Transverse colon (tissue), 4 donors: ENCODE measurements at regions of chr17 and their contacts with region 1.

Region 1: DNA sequence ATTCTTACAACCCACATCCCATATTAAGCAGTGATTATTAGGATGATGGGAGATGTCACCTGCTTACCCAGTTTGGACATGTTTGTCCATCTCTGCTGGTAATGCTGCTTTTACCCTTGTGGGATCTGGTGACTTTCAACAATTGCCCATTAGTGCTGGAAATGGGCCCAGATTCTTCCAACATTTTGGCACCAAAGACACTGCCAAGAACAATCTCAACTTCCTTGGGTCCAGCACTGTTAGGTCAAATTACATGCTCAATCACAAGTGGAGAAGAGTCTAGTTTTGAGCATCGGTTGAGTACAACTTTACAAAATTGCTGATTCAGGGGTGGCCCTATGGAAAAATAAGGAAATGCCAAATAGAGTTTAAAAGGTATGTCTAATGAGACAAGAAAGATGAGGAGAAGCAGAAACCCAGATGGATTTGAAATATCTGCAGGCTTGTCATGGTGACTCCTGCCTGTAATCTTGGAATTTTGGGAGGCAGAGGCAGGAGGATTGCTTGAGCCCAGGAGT is 13.0 kb upstream of the ZFP3 start:
- DNase-seq: no peak
- H3K4me3 ChIP-seq: no peak overlapping the region
- H3K27ac ChIP-seq: no peak overlapping the region
- H3K4me1 ChIP-seq: peaks cover 0 to 7% (median 0%) of the 10 kb centered on the region in 4 donors
- H3K27me3 ChIP-seq: no peaks in the 10 kb centered on the region
- CTCF ChIP-seq: no peak
- EP300 ChIP-seq: no peak
- POLR2A ChIP-seq: no peak

Region 2: GRCh38 chr17:4648741-4649140 is 416.5 kb before region 1 on chr17:
- in situ Hi-C with region 1: no loop called
- intact Hi-C with region 1: no loop called
- DNase-seq: peak; percentile 63
- H3K4me3 ChIP-seq: no peak overlapping the region
- H3K27ac ChIP-seq: peak overlapping the region; percentile 27 to 66 (median 54)
- H3K4me1 ChIP-seq: peaks cover 0 to 23% (median 14%) of the 10 kb centered on the region in 4 donors
- H3K27me3 ChIP-seq: peaks cover 5% of the 10 kb centered on the region
- CTCF ChIP-seq: no peak
- EP300 ChIP-seq: no peak
- POLR2A ChIP-seq: no peak

Region 3: GRCh38 chr17:4913994-4914393 is 151.3 kb before region 1 on chr17:
- in situ Hi-C with region 1: loop called in 3 of 4 experiments (anchors 10 to 25 kb)
- intact Hi-C with region 1: loop called (anchors 5 kb)
- DNase-seq: no peak
- H3K4me3 ChIP-seq: no peak overlapping the region
- H3K27ac ChIP-seq: no peak overlapping the region
- H3K4me1 ChIP-seq: peaks cover 3 to 13% (median 10%) of the 10 kb centered on the region in 4 donors
- H3K27me3 ChIP-seq: no peaks in the 10 kb centered on the region
- CTCF ChIP-seq: peak in 1 of 5 experiments; percentile 25
- EP300 ChIP-seq: no peak
- POLR2A ChIP-seq: no peak

Region 4: DNA sequence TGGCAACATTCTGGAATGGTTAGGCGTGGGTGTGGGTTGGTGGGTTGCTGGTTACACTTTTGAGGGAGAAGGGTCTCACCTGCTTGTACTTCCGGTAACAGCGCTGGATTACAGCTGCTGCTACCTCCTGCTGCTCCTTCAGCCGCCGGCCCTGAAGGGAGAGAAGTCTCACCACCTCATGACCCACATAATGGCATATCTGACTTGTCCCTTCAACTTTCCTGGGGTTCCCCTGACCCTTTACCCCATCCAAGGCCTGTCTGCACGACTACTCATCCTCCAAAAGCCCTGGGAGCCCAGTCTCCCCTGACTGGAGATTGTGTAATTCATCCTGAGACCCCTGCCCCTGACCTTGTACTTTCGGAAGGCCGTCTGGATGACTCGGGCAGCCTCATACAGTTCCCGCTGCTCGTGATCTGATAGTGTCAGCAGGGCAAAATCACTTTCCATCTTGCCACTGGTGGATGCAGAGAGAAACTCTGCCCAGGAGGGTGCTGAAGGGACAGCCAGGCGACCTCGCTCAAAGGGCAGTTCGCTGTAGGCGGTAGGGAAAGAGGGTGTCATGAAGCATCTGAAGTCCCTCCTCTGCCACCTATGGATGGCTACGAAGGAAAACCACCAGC is 95.6 kb before region 1 on chr17:
- in situ Hi-C with region 1: no loop called
- intact Hi-C with region 1: loop called (anchors 10 kb)
- DNase-seq: no peak
- H3K4me3 ChIP-seq: no peak overlapping the region
- H3K27ac ChIP-seq: peak overlapping the region; percentile 91 to 98 (median 96)
- H3K4me1 ChIP-seq: peaks cover 14 to 33% (median 26%) of the 10 kb centered on the region in 4 donors
- H3K27me3 ChIP-seq: no peaks in the 10 kb centered on the region
- CTCF ChIP-seq: no peak
- EP300 ChIP-seq: no peak
- POLR2A ChIP-seq: no peak

Region 5: GRCh38 chr17:5031365-5032082 is 33.8 kb before region 1 on chr17:
- in situ Hi-C with region 1: loop called in 1 of 4 experiments (anchors 5 kb)
- intact Hi-C with region 1: loop called (anchors 5 kb)
- DNase-seq: peak; percentile 88
- H3K4me3 ChIP-seq: peak overlapping the region; percentile 16 to 56 (median 40)
- H3K27ac ChIP-seq: peak overlapping the region; percentile 26 to 74 (median 72)
- H3K4me1 ChIP-seq: peaks cover 0 to 22% (median 4%) of the 10 kb centered on the region in 4 donors
- H3K27me3 ChIP-seq: peaks cover 10% of the 10 kb centered on the region
- CTCF ChIP-seq: peak; percentile 81 to 90 (median 85)
- EP300 ChIP-seq: no peak
- POLR2A ChIP-seq: no peak